Gastrocnemius medialis (tissue), 4 donors: ENCODE measurements at regions of chr9 and their contacts with region 1.

Region 1: DNA sequence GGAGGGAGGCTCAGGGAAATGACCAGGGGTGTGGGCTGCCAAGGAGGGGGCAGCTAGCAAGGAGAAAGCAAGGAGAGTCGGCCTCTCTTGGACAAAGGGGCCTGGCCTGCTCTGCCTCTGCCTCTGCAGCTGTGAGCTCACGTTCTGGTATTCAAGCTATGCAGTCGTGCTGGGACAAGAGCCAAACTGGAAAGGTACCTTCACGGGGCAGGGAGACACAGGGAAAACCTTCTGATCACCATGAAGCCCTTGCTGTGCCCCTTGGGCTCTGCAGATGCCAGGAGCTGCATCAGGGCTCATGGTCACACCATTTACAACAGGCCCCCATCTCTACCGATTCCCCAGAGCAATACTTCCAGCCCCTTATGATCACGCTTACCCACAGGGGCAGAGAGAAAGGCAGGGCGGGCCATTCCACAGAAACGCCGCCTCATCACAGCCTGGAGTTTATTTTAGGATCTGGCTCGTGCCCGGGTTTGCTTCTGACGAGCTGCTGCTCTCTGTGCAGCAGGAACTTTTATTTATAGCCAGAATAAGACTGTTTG is 63.2 kb downstream of the PRRT1B start:
- DNase-seq: peak; percentile 79 to 93
- ATAC-seq: peak; percentile 88 to 92
- H3K4me3 ChIP-seq: peak overlapping the region in 2 of 4 donors; percentile 2 to 16
- H3K27ac ChIP-seq: peak overlapping the region; percentile 87 to 91 (median 89)
- H3K4me1 ChIP-seq: peaks cover 36 to 56% of the 10 kb centered on the region in 2 donors
- H3K27me3 ChIP-seq: no peaks in the 10 kb centered on the region
- CTCF ChIP-seq: no peak
- POLR2A ChIP-seq: peak in 1 of 2 donors; percentile 9

Region 2: DNA sequence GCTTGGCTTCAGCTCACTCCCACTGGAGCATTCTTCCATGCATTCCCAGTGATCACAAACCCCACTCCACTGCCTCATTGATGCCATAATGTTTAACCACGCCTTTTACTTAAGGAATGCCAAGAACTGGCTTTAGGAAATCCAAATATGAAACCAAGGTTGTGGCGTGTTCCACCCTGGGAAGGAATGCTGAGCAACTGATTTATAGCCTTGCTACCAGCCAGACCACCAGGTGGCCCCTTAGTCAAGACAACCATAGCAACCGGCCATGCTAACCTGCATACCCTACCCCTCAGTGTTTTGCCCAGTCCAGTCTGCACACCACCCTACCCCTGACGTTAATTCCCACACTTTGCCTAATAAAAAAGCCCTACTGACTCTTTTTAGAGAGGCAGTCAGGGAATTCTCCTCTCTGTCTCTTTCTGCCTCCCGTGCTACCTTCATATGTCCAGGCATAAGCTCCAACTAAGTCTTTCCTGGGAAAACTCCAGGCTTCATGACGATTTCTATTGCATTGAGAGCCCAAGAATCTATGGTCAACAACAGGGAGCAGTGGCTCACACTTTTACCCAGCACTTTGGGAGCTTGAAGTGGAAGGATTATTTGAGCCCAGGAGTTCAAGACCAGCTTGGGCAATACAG is 241.7 kb before region 1 on chr9:
- in situ Hi-C with region 1: no loop called
- intact Hi-C with region 1: no loop called
- DNase-seq: no peak
- ATAC-seq: no peak
- H3K4me3 ChIP-seq: no peak overlapping the region
- H3K27ac ChIP-seq: no peak overlapping the region
- H3K4me1 ChIP-seq: peaks cover 0 to under 1% of the 10 kb centered on the region in 2 donors
- H3K27me3 ChIP-seq: no peaks in the 10 kb centered on the region
- CTCF ChIP-seq: peak in 3 of 5 experiments; percentile 26 to 35 (median 32)
- POLR2A ChIP-seq: no peak

Region 3: DNA sequence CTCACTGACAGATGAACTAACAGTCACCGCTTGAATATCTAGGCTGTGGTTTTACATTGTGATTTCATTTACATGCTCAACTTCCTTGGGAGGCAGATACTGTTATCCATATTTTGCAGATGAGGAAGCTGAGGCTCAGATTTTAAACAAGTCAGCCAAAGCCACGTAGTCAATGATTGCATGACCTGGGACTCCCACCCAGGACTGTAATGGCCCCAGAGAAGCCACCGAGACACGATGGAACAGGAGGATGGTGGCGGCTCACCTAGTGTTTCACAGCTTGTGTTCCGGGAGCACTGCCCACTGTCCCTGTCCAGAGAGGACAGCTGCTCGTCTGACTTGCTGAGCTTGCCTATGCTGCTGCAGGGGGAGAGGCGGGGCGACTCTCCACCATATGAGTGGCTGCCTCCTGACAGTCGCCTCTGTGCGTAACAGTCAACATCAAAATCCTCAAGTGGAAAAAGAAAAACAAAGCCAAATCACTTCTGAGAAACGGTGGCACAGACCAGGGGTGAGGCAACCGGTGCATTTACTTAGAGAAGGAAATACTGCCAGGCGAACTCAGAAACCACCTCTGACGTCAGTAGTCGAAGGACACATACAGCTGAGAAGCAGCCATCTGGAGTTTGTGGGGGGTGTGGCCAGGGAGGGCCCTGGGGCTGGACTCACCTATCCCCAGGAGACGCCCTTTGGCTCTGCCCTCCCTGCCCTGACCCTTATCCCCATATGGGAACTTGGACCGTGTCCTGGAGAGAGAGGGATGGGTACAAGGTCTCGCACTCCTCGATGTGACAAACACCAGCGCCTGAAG is 19.3 kb after region 1 on chr9:
- in situ Hi-C with region 1: no loop called
- intact Hi-C with region 1: loop called (anchors 1 kb)
- DNase-seq: peak; percentile 89 to 96
- ATAC-seq: peak; percentile 85 to 90
- H3K4me3 ChIP-seq: no peak overlapping the region
- H3K27ac ChIP-seq: peak overlapping the region; percentile 88 to 93 (median 90)
- H3K4me1 ChIP-seq: peaks cover 47 to 50% of the 10 kb centered on the region in 2 donors
- H3K27me3 ChIP-seq: no peaks in the 10 kb centered on the region
- CTCF ChIP-seq: no peak
- POLR2A ChIP-seq: peak; percentile 54 to 69

Region 4: DNA sequence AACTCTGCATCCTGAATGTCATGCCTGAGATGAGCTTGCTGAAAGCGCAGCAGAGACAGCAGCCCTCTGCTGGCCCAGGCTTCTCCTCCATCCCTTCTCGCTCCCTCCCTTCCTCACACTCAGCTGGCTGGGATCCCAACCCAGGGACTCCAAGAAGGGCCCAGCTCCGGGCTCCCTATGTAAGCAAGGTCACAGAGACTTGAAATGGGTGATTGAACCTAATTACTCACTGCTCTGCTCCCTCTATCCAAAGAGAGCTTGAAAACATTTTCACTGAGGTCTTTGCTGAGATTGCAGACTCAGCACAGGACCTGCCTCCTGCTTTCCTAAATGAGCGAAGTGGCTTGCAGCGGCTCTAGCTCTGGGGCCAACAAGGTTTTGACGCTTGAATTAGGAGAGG is 88.5 kb after region 1 on chr9:
- in situ Hi-C with region 1: no loop called
- intact Hi-C with region 1: no loop called
- DNase-seq: no peak
- ATAC-seq: no peak
- H3K4me3 ChIP-seq: no peak overlapping the region
- H3K27ac ChIP-seq: peak overlapping the region; percentile 74 to 85 (median 79)
- H3K4me1 ChIP-seq: peaks cover 63 to 85% of the 10 kb centered on the region in 2 donors
- H3K27me3 ChIP-seq: no peaks in the 10 kb centered on the region
- CTCF ChIP-seq: peak in 1 of 5 experiments; percentile 14
- POLR2A ChIP-seq: no peak

Region 5: GRCh38 chr9:131709771-131710454 is 101.3 kb after region 1 on chr9:
- in situ Hi-C with region 1: no loop called
- intact Hi-C with region 1: no loop called
- DNase-seq: peak; percentile 44 to 65
- ATAC-seq: peak; percentile 56 to 64
- H3K4me3 ChIP-seq: peak overlapping the region in 3 of 4 donors; percentile 11 to 44 (median 37)
- H3K27ac ChIP-seq: peak overlapping the region; percentile 75 to 88 (median 80)
- H3K4me1 ChIP-seq: peaks cover 58 to 83% of the 10 kb centered on the region in 2 donors
- H3K27me3 ChIP-seq: no peaks in the 10 kb centered on the region
- CTCF ChIP-seq: peak in 3 of 5 experiments; percentile 4 to 29 (median 21)
- POLR2A ChIP-seq: peak; percentile 22 to 33

Region 6: GRCh38 chr9:132069046-132069898 is 460.7 kb after region 1 on chr9:
- in situ Hi-C with region 1: no loop called
- intact Hi-C with region 1: no loop called
- DNase-seq: no peak
- ATAC-seq: no peak
- H3K4me3 ChIP-seq: no peak overlapping the region
- H3K27ac ChIP-seq: no peak overlapping the region
- H3K4me1 ChIP-seq: peaks cover 32 to 41% of the 10 kb centered on the region in 2 donors
- H3K27me3 ChIP-seq: no peaks in the 10 kb centered on the region
- CTCF ChIP-seq: no peak
- POLR2A ChIP-seq: no peak